Colonic mucosa (tissue), 4 donors: ENCODE measurements at regions of chr6 and their contacts with region 1.

Region 1: GRCh38 chr6:14210663-14211561 is 93.3 kb downstream of the CD83 start:
- DNase-seq: peak; percentile 95
- H3K4me3 ChIP-seq: peak overlapping the region; percentile 74
- H3K27ac ChIP-seq: peak overlapping the region; percentile 70
- H3K4me1 ChIP-seq: no peaks in the 10 kb centered on the region
- H3K27me3 ChIP-seq: no peaks in the 10 kb centered on the region
- CTCF ChIP-seq: peak; percentile 36

Region 2: GRCh38 chr6:14711056-14711703 is 500.3 kb after region 1 on chr6:
- intact Hi-C with region 1: loop called (anchors 10 kb)
- DNase-seq: peak; percentile 56
- H3K4me3 ChIP-seq: no peak overlapping the region
- H3K27ac ChIP-seq: no peak overlapping the region
- H3K4me1 ChIP-seq: no peaks in the 10 kb centered on the region
- H3K27me3 ChIP-seq: no peaks in the 10 kb centered on the region
- CTCF ChIP-seq: peak; percentile 37

Region 3: DNA sequence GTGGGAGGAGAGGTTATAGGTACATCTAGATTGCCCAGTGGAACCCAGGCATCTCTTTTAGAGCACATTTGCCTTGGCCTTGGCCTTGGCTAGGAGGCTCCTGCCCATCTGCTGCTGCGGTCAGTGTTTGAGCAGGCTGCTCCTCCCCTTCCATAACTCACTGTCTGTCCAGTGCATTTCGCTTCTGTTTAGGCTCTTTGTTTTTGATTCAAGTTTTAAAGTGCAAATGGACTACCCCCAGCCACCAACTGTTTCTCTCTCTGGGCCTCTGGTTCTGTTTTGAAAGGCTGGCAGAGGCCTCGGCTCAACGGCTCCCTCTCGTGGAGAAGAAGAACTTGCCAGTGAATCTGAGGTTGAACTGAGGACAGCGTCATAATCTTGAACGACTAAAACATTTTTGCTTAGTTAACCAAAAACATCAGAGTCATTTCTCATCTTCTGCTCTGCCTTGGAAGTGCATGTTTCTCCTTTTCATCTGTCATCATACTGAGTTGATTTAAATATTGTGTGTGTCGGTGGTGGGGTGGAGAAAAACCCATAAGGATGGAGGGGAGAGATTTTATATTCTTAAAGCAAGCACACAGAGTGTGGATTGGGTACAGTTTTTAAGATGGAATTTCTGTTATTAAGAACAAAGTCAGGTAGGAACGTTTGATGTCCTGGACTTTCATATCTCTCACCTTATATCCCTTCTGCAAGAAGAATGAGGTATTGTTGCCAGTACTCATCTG is 1280.5 kb after region 1 on chr6:
- intact Hi-C with region 1: loop called (anchors 10 kb)
- DNase-seq: peak; percentile 78
- H3K4me3 ChIP-seq: no peak overlapping the region
- H3K27ac ChIP-seq: no peak overlapping the region
- H3K4me1 ChIP-seq: no peaks in the 10 kb centered on the region
- H3K27me3 ChIP-seq: no peaks in the 10 kb centered on the region
- CTCF ChIP-seq: peak; percentile 85